ENCODE measurements at regions of chr19 and their contacts with region 1.

Region 1: DNA sequence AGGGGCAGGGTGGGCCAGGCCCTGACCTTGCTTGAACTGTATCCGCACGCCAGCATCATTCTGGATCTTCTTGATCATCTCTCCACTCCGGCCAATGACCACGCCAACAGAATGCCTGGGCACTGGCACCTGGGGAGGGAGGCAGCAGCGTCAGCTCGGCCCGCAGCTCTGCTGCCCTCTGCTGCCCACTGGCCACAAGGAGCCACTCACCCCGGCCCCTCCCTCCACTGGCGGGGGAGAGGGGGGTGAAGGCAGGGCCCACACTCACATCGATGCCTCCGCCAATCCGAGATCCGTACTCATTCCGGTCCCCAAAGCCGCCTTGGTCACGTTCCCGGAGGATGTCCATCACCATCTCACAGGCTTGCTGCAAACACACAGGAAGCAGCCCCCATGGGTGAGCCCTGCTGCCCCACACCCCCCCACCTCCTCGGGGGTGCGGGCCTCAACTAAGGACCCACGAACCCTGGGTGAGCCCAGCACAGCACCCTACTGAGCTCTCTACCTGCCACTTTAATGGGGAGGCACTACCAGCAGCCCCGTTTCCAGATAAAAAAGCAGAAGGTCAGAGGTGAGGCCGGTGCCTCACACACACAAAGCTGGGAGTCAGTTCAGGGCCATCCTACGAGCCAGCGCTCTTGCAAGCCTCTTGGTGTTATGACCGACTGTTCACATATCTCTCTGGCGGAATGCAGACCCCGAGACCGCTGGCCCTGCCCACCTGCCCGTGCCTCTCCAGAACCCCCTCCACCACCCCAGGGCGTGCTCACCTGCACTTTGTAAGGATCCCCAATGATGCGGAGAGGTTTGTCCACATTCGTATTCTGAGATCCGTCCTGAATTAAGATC is 6.7 kb downstream of the KHSRP start:
- DNase-seq: peak in 8 of 10 donors; percentile 52 to 83 (median 62)
- H3K4me3 ChIP-seq: peak overlapping the region in 1 of 59 donors; percentile 1
- H3K27ac ChIP-seq: peak overlapping the region in 49 of 59 donors; percentile 1 to 78 (median 57)
- H3K27me3 ChIP-seq: no peaks in the 10 kb centered on the region
- CTCF ChIP-seq: peak in 54 of 56 donors; percentile 17 to 76 (median 59)

Region 2: DNA sequence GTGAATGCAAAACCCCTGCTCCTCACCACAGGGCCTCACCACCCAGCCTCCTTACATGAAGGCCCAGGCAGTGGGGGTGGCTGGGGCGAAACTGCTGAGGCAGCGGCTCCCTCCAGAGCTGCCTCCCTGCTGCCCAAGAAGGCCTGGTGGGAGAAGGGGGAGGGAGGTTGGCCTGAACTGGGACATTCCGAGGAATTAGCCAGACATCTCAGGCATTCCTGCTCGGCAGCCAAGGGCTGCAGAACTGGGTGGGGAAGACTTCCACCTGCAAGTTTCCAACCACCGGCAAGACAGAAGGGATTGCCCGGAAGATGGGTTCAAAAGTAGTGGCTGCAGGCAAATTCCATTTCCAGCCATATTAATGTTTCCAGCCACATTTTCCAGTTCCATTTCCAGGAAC is 39.9 kb before region 1 on chr19:
- intact Hi-C with region 1: loop called in 1 of 2 experiments (anchors 5 kb)
- DNase-seq: peak in 1 of 10 donors; percentile 37
- H3K4me3 ChIP-seq: no peak overlapping the region
- H3K27ac ChIP-seq: peak overlapping the region in 12 of 59 donors; percentile 2 to 94 (median 18)
- H3K27me3 ChIP-seq: no peaks in the 10 kb centered on the region
- CTCF ChIP-seq: no peak

Region 3: DNA sequence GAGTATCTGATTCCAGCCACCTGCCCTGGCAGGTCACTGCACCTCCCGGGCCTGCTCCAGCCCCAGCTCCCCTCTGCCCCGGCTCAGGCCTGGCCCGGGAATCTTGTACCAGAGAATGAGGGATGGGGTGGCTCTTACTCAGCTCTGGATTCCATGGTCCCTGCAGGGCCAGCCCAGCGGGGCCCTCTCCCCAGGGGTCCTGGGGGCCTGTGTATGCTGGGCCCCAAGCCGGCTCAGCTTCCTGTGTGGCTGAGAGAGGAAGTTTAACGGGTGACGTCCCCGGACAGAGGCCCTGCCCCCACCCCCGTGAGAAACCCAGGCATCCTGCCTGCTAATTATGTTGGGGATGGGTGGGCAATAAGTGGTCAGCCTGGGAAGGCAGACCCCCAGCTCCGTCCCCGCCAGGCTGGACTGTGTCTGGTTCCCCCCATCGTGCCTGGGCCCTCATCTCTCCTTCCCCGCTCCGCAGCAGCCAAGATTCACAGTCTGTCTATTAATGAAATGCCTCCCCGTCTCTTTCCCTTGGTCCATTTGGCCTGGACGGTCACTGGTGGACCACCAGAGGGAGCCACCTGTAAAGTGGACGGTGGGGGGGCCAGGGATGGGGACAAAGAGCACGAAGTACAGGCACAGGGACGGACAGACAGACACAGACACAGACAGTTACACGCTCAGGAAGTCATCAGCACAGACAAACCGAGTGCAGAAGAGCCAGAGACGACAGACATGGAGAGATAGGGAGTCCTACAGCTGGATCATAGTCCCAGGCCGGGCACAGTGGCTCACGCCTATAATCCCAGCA is 63.8 kb after region 1 on chr19 and contains the start of gene DENND1C:
- intact Hi-C with region 1: no loop called
- DNase-seq: peak in 7 of 10 donors; percentile 26 to 75 (median 56)
- H3K4me3 ChIP-seq: peak within 1 kb of the TSS in 45 of 59 donors; percentile 7 to 51 (median 29)
- H3K27ac ChIP-seq: peak within 1 kb of the TSS in 49 of 59 donors; percentile 4 to 87 (median 61)
- H3K27me3 ChIP-seq: peaks cover 0 to 1% (median 0%) of the 10 kb centered on the region in 45 donors
- CTCF ChIP-seq: peak; percentile 11 to 80 (median 61)
- total RNA-seq, gene DENND1C: 0.65 to 5.4 (median 2.4) TPM

Region 4: GRCh38 chr19:6532244-6532999 is 114.5 kb after region 1 on chr19:
- intact Hi-C with region 1: no loop called
- DNase-seq: no peak
- H3K4me3 ChIP-seq: peak overlapping the region in 54 of 59 donors; percentile 16 to 95 (median 82)
- H3K27ac ChIP-seq: peak overlapping the region in 9 of 59 donors; percentile 7 to 87 (median 30)
- H3K27me3 ChIP-seq: peaks cover 0 to 5% (median 0%) of the 10 kb centered on the region in 45 donors
- CTCF ChIP-seq: no peak